GM13977 (cell line): ENCODE measurements at regions of chrX and their contacts with region 1.

Region 1: DNA sequence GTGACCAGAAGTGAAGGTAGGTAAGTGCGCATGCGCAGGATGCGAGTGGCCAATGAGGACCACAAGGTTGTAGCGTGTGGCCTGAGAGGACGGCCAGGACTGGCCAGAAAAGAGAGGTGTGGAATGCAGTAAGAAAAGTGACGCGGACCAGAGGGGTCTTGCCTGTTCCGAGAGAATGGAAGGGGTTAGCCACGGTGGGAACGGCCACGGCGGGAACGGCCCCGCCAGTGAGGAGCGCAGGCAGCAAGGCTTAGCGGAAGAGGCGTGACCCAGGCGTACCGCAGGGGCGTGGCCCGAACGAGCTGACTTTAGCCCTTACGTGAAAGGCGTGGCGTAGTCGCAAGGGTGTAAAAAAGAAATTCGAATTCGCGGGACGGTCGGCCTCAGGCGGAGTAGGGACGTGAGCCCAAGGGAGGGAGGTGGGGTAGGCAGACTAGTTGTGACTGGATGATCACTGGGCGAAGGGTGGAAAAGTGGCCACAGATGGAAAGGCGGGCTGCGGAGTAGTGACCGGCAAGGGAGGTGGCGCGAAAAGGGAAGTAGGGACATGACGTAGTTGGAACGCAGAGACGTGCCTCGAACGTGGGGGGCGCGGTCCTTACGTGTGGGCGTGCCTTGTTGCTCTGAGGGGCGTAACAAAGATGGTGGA is 10.4 kb upstream of the CLTRN start:
- DNase-seq: peak; percentile 88
- CTCF ChIP-seq: no peak

Region 2: DNA sequence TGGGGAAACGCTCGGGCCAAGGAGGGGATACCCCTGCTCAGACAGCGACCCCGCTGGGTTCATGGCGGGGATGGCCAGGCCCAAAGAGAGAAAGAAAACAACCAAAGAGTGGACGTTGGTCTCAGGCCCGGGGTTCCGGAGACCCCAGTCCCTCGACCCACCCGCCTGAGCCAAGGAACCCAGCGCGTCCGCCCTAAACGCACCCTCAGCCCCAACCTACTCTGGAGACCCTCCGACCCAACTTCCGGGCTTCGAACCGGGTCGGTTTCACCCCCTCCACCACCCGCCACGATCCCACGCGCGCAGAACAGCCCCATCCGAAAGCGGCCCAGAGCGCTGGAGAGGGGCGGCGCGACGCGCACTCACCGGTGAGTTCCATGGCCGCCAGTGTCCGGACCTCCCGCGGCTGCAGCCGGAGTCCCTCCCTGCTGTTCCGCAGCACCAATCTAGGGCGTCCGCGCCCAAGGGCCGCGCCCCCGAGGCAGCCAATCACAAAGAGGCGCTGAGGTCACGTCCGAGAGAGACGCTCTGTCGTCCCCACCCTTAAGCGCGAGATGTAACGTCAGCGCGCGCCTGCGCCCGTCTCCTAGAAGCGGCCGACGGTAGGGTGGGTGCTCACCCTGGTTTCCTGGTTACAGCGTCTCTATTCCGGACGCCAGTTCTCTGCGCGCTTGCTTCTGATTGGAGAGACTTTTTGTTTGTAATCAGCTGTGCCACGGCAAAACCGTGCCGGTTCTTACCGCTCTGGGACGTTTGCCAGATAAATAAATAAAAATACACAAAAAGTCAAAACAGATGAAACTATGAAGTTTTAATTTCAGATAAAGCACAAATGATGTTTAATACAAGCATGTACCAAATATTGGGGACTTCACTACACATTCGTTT is 339.6 kb before region 1 on chrX and contains the start of gene PIGA:
- in situ Hi-C with region 1: loop called (anchors 25 kb)
- DNase-seq: peak; percentile 90
- CTCF ChIP-seq: no peak

Region 3: GRCh38 chrX:15493118-15493962 is 181.6 kb before region 1 on chrX and contains the start of gene PIR:
- in situ Hi-C with region 1: loop called (anchors 25 kb)
- DNase-seq: peak; percentile 70
- CTCF ChIP-seq: peak; percentile 55